T-cell (primary cell): ENCODE measurements at regions of chr18 and their contacts with region 1.

Region 1: DNA sequence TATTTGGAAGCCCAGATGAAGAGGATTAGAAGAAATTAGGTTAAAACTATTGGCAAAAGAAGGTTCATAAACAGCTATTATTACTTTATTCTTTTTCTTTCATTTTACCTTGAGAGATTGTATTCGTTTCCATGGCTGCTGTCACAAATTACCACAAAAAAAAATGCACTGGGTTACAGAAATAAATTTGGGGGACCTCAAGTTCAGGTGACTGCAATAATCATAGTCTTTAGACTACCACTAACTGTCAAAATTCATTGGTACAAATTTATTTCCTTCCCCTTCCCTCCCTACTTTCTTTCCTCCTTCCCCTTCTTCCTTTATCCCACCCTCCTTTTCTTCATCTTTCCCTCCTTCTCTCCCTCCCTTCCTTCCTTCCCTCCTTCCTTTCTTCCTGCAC is 217.8 kb upstream of the PIK3C3 start:
- DNase-seq: no peak
- ATAC-seq: no peak
- H3K4me3 ChIP-seq: no peak overlapping the region
- H3K4me3 Mint-ChIP-seq: no peak overlapping the region
- H3K27ac ChIP-seq: no peak overlapping the region
- H3K27ac Mint-ChIP-seq: no peak overlapping the region
- H3K4me1 ChIP-seq: no peaks in the 10 kb centered on the region
- H3K4me1 Mint-ChIP-seq: no peaks in the 10 kb centered on the region
- H3K27me3 ChIP-seq: no peaks in the 10 kb centered on the region
- H3K27me3 Mint-ChIP-seq: no peaks in the 10 kb centered on the region

Region 2: GRCh38 chr18:41753826-41754225 is 16.6 kb after region 1 on chr18:
- CTCF ChIA-PET with region 1: interaction called in 1 of 2 experiments, 17 read pairs
- POLR2A ChIA-PET with region 1: no interaction called
- DNase-seq: no peak
- ATAC-seq: no peak
- H3K4me3 ChIP-seq: no peak overlapping the region
- H3K4me3 Mint-ChIP-seq: no peak overlapping the region
- H3K27ac ChIP-seq: no peak overlapping the region
- H3K27ac Mint-ChIP-seq: no peak overlapping the region
- H3K4me1 ChIP-seq: no peaks in the 10 kb centered on the region
- H3K4me1 Mint-ChIP-seq: no peaks in the 10 kb centered on the region
- H3K27me3 ChIP-seq: no peaks in the 10 kb centered on the region
- H3K27me3 Mint-ChIP-seq: no peaks in the 10 kb centered on the region